Naive thymus-derived CD4-positive, alpha-beta T cell (primary cell): ENCODE measurements at regions of chr15 and their contacts with region 1.

Region 1: GRCh38 chr15:36883713-36884517 is 216.4 kb downstream of the MEIS2 start:
- DNase-seq: peak in 4 of 9 donors; percentile 9 to 68 (median 14)
- ATAC-seq: no peak
- H3K4me3 ChIP-seq: no peak overlapping the region
- H3K4me3 Mint-ChIP-seq: peak overlapping the region in 2 of 10 donors; percentile 5 to 55
- H3K27ac ChIP-seq: no peak overlapping the region
- H3K27ac Mint-ChIP-seq: peak overlapping the region in 1 of 9 donors; percentile 23
- H3K4me1 ChIP-seq: no peaks in the 10 kb centered on the region
- H3K4me1 Mint-ChIP-seq: peaks cover 6 to 30% (median 24%) of the 10 kb centered on the region in 7 donors
- H3K27me3 ChIP-seq: peaks cover 7 to 38% of the 10 kb centered on the region in 2 donors
- H3K27me3 Mint-ChIP-seq: peaks cover 87 to 98% (median 93%) of the 10 kb centered on the region in 5 donors

Region 2: GRCh38 chr15:37106490-37107001 is 222.6 kb after region 1 on chr15:
- CTCF ChIA-PET with region 1: no interaction called
- POLR2A ChIA-PET with region 1: no interaction called
- intact Hi-C with region 1: loop called in 1 of 2 experiments (anchors 1 kb)
- DNase-seq: no peak
- ATAC-seq: no peak
- H3K4me3 ChIP-seq: no peak overlapping the region
- H3K4me3 Mint-ChIP-seq: no peak overlapping the region
- H3K27ac ChIP-seq: no peak overlapping the region
- H3K27ac Mint-ChIP-seq: no peak overlapping the region
- H3K4me1 ChIP-seq: peaks cover 2 to 3% of the 10 kb centered on the region in 2 donors
- H3K4me1 Mint-ChIP-seq: peaks cover 7 to 33% (median 25%) of the 10 kb centered on the region in 7 donors
- H3K27me3 ChIP-seq: peaks cover 9 to 36% of the 10 kb centered on the region in 2 donors
- H3K27me3 Mint-ChIP-seq: peaks cover 88 to 98% (median 97%) of the 10 kb centered on the region in 5 donors

Region 3: GRCh38 chr15:37891766-37892368 is 1008.0 kb after region 1 on chr15:
- CTCF ChIA-PET with region 1: no interaction called
- POLR2A ChIA-PET with region 1: no interaction called
- intact Hi-C with region 1: loop called in 1 of 2 experiments (anchors 2 kb)
- DNase-seq: peak in 1 of 9 donors; percentile 4
- ATAC-seq: no peak
- H3K4me3 ChIP-seq: no peak overlapping the region
- H3K4me3 Mint-ChIP-seq: no peak overlapping the region
- H3K27ac ChIP-seq: no peak overlapping the region
- H3K27ac Mint-ChIP-seq: no peak overlapping the region
- H3K4me1 ChIP-seq: no peaks in the 10 kb centered on the region
- H3K4me1 Mint-ChIP-seq: peaks cover 0 to 2% (median 0%) of the 10 kb centered on the region in 7 donors
- H3K27me3 ChIP-seq: no peaks in the 10 kb centered on the region
- H3K27me3 Mint-ChIP-seq: peaks cover 0 to 29% (median 14%) of the 10 kb centered on the region in 5 donors

Region 4: DNA sequence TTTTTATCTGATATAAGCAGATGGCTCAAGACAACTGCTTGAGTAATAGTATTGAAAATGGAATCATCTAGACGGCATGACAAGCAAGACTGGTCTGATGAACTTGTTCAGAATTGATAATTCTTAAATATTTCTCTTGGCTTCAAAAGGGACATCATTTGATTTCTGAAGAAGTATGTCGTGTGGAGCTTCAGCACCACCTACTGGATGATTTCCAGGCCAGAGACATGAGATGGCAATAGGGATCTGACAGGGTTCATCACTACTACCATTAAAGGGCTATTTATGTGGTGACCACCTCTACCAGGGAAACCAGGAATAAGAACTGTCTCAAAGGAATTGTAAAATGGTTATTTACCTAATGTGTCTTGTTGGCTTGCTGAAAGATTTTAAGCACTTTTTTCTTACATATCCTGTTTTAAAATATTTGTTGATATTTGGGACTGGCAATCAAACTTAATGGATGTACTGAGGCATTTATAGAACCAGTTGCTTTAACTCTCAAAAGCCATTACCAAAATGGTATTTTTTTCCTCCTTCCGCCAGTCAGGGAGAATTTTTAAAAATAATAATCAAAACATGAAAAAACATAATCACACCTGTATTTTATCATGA is 1470.5 kb after region 1 on chr15:
- CTCF ChIA-PET with region 1: no interaction called
- POLR2A ChIA-PET with region 1: no interaction called
- intact Hi-C with region 1: loop called in 1 of 2 experiments (anchors 5 kb)
- DNase-seq: peak in 7 of 9 donors; percentile 14 to 46 (median 38)
- ATAC-seq: peak; percentile 57
- H3K4me3 ChIP-seq: no peak overlapping the region
- H3K4me3 Mint-ChIP-seq: no peak overlapping the region
- H3K27ac ChIP-seq: no peak overlapping the region
- H3K27ac Mint-ChIP-seq: peak overlapping the region in 1 of 9 donors; percentile 30
- H3K4me1 ChIP-seq: no peaks in the 10 kb centered on the region
- H3K4me1 Mint-ChIP-seq: no peaks in the 10 kb centered on the region
- H3K27me3 ChIP-seq: no peaks in the 10 kb centered on the region
- H3K27me3 Mint-ChIP-seq: peaks cover 3 to 23% (median 12%) of the 10 kb centered on the region in 5 donors